Dendritic cell treated with granulocyte-macrophage colony-stimulating factor and Interleukin-4, amounts not matched to agents 40 ng/mL and 50 ng/mL, for 4 days (primary cell): ENCODE measurements at regions of chr9 and their contacts with region 1.

Region 1: GRCh38 chr9:78053627-78054026 is 22.0 kb upstream of the GNAQ start:
- H3K4me3 Mint-ChIP-seq: no peak overlapping the region
- H3K27ac Mint-ChIP-seq: no peak overlapping the region
- H3K4me1 Mint-ChIP-seq: peaks cover 26% of the 10 kb centered on the region
- H3K27me3 Mint-ChIP-seq: peaks cover 16% of the 10 kb centered on the region

Region 2: GRCh38 chr9:77926309-77926959 is 127.2 kb before region 1 on chr9:
- intact Hi-C with region 1: no loop called
- H3K4me3 Mint-ChIP-seq: no peak overlapping the region
- H3K27ac Mint-ChIP-seq: peak overlapping the region; percentile 42
- H3K4me1 Mint-ChIP-seq: peaks cover 50% of the 10 kb centered on the region
- H3K27me3 Mint-ChIP-seq: no peaks in the 10 kb centered on the region

Region 3: GRCh38 chr9:78112406-78112914 is 58.8 kb after region 1 on chr9:
- intact Hi-C with region 1: loop called (anchors 5 kb)
- H3K4me3 Mint-ChIP-seq: no peak overlapping the region
- H3K27ac Mint-ChIP-seq: no peak overlapping the region
- H3K4me1 Mint-ChIP-seq: peaks cover 27% of the 10 kb centered on the region
- H3K27me3 Mint-ChIP-seq: peaks cover 4% of the 10 kb centered on the region